ENCODE measurements at regions of chr1 and their contacts with region 1.

Region 1: GRCh38 chr1:66533804-66534740 is at the start of gene SGIP1:
- DNase-seq: peak; percentile 79 to 89
- H3K4me3 ChIP-seq: peak within 1 kb of the TSS; percentile 57 to 61
- H3K27ac ChIP-seq: peak within 1 kb of the TSS; percentile 91 to 92
- H3K4me1 ChIP-seq: peaks cover 8 to 63% (median 13%) of the 10 kb centered on the region in 4 donors
- H3K27me3 ChIP-seq: no peaks in the 10 kb centered on the region
- CTCF ChIP-seq: no peak

Region 2: DNA sequence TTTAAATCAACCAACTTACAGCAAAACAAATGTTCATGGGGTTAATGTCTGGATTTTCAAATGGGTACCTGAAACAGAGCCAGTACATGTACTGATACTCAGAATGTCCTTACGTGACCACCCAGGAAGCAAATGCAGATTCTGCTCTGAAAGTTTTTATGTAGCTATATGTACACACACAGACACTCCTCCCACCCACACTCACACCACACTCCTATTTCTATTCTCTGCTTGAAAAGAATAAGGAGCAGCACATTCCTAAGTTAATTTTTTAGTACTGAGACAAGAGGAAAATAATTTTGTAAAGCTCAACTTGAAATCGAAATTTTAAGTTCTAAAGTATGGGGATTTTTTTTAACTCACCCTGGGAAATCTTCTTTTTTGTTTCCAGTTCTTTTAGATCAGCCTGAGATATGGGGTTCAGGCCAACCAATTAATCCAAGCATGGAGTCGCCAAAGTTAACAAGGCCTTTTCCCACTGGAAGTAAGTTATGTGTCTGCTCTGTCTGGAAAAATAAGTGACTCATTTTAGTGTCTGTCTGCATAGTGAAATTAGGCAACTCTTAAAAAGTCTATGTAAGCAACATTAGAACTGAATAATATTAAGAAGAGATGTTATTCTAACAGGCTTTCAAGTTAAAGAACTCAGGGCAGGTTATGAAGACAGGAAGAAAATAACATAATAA is 142.7 kb after region 1 on chr1:
- intact Hi-C with region 1: loop called (anchors 10 kb)
- DNase-seq: peak in 1 of 2 donors; percentile 28
- H3K4me3 ChIP-seq: no peak overlapping the region
- H3K27ac ChIP-seq: peak overlapping the region; percentile 73 to 75
- H3K4me1 ChIP-seq: peaks cover 3 to 60% (median 37%) of the 10 kb centered on the region in 4 donors
- H3K27me3 ChIP-seq: no peaks in the 10 kb centered on the region
- CTCF ChIP-seq: no peak

Measured in tibial artery (tissue), 4 donors.